Naive thymus-derived CD4-positive, alpha-beta T cell (primary cell): ENCODE measurements at regions of chr2 and their contacts with region 1.

Region 1: DNA sequence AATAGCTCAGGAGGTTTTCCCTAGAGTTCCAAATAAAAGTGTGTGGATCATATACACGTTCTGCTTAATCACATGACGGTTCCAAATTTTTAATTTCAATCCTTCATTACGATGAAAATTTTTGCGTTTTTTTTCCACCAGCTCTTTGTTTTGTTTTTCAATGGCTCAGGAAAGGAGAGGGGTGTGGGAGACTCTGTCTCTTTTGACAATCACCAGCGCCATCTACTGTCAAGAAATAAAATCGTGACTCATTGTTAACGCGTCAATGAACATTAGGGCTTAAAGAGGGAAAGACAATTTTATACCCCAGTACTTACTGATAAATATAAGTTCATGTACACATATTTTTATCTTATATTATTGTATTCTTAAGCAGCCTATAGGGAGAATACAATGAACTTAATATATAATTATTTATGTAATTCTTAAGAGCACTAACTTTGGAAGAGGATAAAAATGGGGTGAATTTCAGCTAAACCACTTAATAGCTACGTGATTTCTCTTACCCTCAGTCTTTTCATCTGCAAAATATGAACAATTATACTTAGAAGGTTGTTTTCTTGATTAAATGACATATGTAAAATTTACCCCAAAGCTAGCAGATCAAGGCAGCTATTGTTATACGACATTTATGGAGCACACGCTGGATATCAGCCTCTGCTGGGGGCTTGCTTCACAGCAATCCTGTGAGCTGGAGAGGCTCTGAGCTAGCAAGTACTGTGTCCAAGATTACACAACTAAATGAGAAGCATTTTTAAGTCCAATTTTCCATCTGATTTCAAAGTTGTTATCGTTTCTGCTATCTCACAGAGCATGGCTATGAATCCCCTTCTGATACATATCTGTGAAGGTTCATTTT is 47.4 kb upstream of the RMDN2 start:
- DNase-seq: peak in 7 of 9 donors; percentile 15 to 60 (median 48)
- ATAC-seq: peak; percentile 81
- H3K4me3 ChIP-seq: no peak overlapping the region
- H3K4me3 Mint-ChIP-seq: no peak overlapping the region
- H3K27ac ChIP-seq: no peak overlapping the region
- H3K27ac Mint-ChIP-seq: no peak overlapping the region
- H3K4me1 ChIP-seq: no peaks in the 10 kb centered on the region
- H3K4me1 Mint-ChIP-seq: peaks cover 0 to 8% (median 0%) of the 10 kb centered on the region in 7 donors
- H3K27me3 ChIP-seq: no peaks in the 10 kb centered on the region
- H3K27me3 Mint-ChIP-seq: peaks cover 9 to 30% (median 18%) of the 10 kb centered on the region in 5 donors

Region 2: DNA sequence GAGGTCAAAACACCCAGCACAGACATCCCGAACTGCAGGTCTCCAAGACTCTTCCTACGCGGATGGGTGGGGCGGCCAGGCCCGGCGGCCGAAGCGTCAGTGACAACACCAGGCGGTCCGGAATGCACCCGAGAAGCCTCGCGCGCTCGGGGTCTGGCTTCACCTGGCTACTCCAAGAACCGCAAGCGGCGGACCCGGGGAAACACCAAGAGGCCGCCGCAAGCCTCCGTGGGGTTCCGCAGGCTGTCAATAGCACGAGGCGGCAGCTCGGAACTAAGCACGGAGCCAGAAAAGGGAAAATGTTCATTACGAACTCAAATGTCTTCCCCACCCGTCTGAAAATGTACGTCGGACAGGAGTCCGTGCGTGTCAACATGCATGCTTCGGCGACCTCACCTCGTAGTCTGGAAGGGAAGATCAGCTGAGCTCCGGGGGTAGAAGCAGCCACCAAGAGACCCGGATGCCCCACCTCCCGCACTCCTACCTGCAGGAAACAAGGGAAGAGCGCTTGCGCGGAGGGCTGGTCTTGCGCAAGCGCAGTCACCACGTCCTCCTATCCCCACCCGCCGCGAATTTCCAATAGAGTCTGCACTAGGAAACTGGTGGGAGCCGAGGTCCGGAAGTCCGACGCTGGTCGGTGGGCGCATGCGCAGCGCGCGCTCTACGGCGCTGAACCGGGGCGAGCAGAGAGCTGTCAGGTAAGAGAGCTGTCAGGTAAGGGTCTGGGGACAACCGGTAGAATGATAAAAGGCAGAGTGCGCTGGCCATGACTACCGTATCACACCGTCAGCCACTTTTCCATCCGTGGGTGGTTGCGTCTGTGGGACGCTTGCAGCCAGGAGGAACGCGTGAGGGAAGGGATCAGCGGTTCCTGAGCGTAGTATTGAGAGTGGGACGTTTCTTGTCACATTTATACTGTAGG is 793.6 kb before region 1 on chr2 and contains the starts of genes GPATCH11 and HEATR5B:
- CTCF ChIA-PET with region 1: interaction called, 3 read pairs
- POLR2A ChIA-PET with region 1: interaction called, 3 read pairs
- intact Hi-C with region 1: loop called in 1 of 2 experiments (anchors 5 kb)
- DNase-seq: peak; percentile 76 to 94 (median 92)
- ATAC-seq: peak; percentile 87
- H3K4me3 ChIP-seq: peak within 1 kb of the TSS; percentile 74
- H3K4me3 Mint-ChIP-seq: peak within 1 kb of the TSS in 1 of 10 donors; percentile 64
- H3K27ac ChIP-seq: peak within 1 kb of the TSS; percentile 85
- H3K27ac Mint-ChIP-seq: no peak within 1 kb of the TSS
- H3K4me1 ChIP-seq: peaks cover 35 to 45% of the 10 kb centered on the region in 2 donors
- H3K4me1 Mint-ChIP-seq: peaks cover 8 to 62% (median 50%) of the 10 kb centered on the region in 7 donors
- H3K27me3 ChIP-seq: no peaks in the 10 kb centered on the region
- H3K27me3 Mint-ChIP-seq: no peaks in the 10 kb centered on the region
- total RNA-seq, gene GPATCH11: 6.0 to 19.0 (median 11.1) TPM
- total RNA-seq, gene HEATR5B: 25.2 to 50.5 (median 39.3) TPM

Region 3: DNA sequence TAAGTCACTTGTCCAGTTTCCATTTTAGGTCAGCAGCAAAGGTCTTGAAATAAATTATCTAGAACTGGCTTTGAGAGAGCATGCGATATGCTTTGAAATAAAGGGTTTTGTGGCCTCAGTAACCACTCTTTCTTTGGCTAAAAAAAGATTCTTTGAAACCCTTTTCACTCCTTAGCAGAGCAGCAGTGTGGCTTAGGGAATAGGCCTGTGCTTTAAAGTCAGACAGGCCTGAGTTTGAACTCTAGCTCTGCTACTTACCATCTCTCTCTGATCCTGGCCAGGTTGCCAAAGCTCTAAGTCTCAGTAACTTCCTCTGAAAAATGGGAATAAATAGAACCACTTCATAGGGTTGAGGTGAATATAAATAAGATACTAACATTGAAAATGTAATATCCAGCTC is 480.5 kb before region 1 on chr2:
- CTCF ChIA-PET with region 1: interaction called, 45 read pairs
- POLR2A ChIA-PET with region 1: interaction called, 3 read pairs
- intact Hi-C with region 1: loop called (anchors 1 kb)
- DNase-seq: no peak
- ATAC-seq: no peak
- H3K4me3 ChIP-seq: no peak overlapping the region
- H3K4me3 Mint-ChIP-seq: no peak overlapping the region
- H3K27ac ChIP-seq: no peak overlapping the region
- H3K27ac Mint-ChIP-seq: no peak overlapping the region
- H3K4me1 ChIP-seq: no peaks in the 10 kb centered on the region
- H3K4me1 Mint-ChIP-seq: peaks cover 0 to 6% (median 3%) of the 10 kb centered on the region in 7 donors
- H3K27me3 ChIP-seq: no peaks in the 10 kb centered on the region
- H3K27me3 Mint-ChIP-seq: peaks cover 0 to 35% (median 0%) of the 10 kb centered on the region in 5 donors

Region 4: GRCh38 chr2:37529830-37530415 is 347.8 kb before region 1 on chr2:
- CTCF ChIA-PET with region 1: no interaction called
- POLR2A ChIA-PET with region 1: no interaction called
- intact Hi-C with region 1: loop called (anchors 2 to 5 kb)
- DNase-seq: no peak
- ATAC-seq: no peak
- H3K4me3 ChIP-seq: no peak overlapping the region
- H3K4me3 Mint-ChIP-seq: no peak overlapping the region
- H3K27ac ChIP-seq: no peak overlapping the region
- H3K27ac Mint-ChIP-seq: no peak overlapping the region
- H3K4me1 ChIP-seq: no peaks in the 10 kb centered on the region
- H3K4me1 Mint-ChIP-seq: peaks cover 0 to 2% (median 0%) of the 10 kb centered on the region in 7 donors
- H3K27me3 ChIP-seq: no peaks in the 10 kb centered on the region
- H3K27me3 Mint-ChIP-seq: peaks cover 0 to 6% (median 0%) of the 10 kb centered on the region in 5 donors

Region 5: GRCh38 chr2:37832590-37833197 is 45.0 kb before region 1 on chr2:
- CTCF ChIA-PET with region 1: interaction called, 12 read pairs
- POLR2A ChIA-PET with region 1: no interaction called
- intact Hi-C with region 1: loop called (anchors 1 kb)
- DNase-seq: peak; percentile 56 to 82 (median 72)
- ATAC-seq: peak; percentile 87
- H3K4me3 ChIP-seq: no peak overlapping the region
- H3K4me3 Mint-ChIP-seq: no peak overlapping the region
- H3K27ac ChIP-seq: no peak overlapping the region
- H3K27ac Mint-ChIP-seq: no peak overlapping the region
- H3K4me1 ChIP-seq: no peaks in the 10 kb centered on the region
- H3K4me1 Mint-ChIP-seq: peaks cover 0 to 15% (median 5%) of the 10 kb centered on the region in 7 donors
- H3K27me3 ChIP-seq: no peaks in the 10 kb centered on the region
- H3K27me3 Mint-ChIP-seq: no peaks in the 10 kb centered on the region